ENCODE measurements at regions of chr1 and their contacts with region 1.

Region 1: GRCh38 chr1:185739967-185740366 is 5.8 kb downstream of the HMCN1 start:
- DNase-seq: no peak
- ATAC-seq: no peak
- H3K4me3 ChIP-seq: peak overlapping the region in 1 of 2 donors; percentile 5
- H3K27ac ChIP-seq: no peak overlapping the region
- H3K4me1 ChIP-seq: peaks cover 2 to 18% of the 10 kb centered on the region in 2 donors
- H3K27me3 ChIP-seq: no peaks in the 10 kb centered on the region

Region 2: GRCh38 chr1:185813401-185813979 is 73.5 kb after region 1 on chr1:
- intact Hi-C with region 1: loop called in 1 of 2 experiments (anchors 5 kb)
- DNase-seq: no peak
- ATAC-seq: no peak
- H3K4me3 ChIP-seq: no peak overlapping the region
- H3K27ac ChIP-seq: no peak overlapping the region
- H3K4me1 ChIP-seq: peaks cover 0 to 3% of the 10 kb centered on the region in 2 donors
- H3K27me3 ChIP-seq: no peaks in the 10 kb centered on the region

Region 3: DNA sequence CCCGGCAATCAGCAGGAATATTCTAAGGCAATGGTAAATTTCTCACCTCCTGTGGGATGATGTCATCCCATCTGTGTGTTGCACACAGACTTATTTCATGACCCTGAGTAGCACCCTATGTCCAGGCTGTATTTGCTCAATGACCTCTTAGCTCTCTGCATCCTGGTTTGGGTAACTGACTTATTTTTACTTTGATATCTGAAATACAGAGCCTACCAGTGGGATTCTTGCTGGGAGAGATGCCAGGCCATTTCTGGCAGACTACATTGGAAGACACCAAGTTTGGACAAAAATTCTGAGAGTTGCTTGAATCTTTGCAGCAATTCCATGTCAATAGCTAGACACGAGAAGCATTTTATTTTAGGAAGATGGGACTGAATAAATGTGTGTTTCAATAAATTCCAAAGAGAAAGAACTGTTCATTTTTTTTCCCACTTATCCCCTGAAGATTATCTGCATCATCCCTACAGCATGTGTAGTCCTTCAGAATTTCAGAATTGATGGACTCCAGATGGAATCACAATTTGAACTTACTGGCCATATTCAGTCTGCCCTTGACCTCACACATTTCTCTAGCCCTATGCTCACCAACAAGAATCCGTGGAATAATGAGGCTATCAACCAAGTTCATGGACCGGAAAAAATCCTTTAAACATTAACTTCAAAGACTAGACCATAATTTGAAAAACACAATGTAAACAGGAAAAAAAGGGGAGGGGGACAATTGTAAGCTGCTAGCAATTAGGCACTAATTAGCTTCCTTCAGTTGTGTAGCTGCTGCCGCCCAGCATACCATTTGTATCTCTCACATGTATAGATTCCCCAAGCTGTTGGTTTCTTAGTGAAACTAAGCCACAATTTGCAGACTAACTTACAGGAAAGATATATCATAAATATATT is 220.7 kb after region 1 on chr1:
- intact Hi-C with region 1: loop called in 1 of 2 experiments (anchors 10 kb)
- DNase-seq: peak in 1 of 2 donors; percentile 55
- ATAC-seq: peak; percentile 63
- H3K4me3 ChIP-seq: no peak overlapping the region
- H3K27ac ChIP-seq: peak overlapping the region in 1 of 2 donors; percentile 48
- H3K4me1 ChIP-seq: peaks cover 6 to 10% of the 10 kb centered on the region in 2 donors
- H3K27me3 ChIP-seq: no peaks in the 10 kb centered on the region